ENCODE measurements at regions of chr15 and their contacts with region 1.

Region 1: DNA sequence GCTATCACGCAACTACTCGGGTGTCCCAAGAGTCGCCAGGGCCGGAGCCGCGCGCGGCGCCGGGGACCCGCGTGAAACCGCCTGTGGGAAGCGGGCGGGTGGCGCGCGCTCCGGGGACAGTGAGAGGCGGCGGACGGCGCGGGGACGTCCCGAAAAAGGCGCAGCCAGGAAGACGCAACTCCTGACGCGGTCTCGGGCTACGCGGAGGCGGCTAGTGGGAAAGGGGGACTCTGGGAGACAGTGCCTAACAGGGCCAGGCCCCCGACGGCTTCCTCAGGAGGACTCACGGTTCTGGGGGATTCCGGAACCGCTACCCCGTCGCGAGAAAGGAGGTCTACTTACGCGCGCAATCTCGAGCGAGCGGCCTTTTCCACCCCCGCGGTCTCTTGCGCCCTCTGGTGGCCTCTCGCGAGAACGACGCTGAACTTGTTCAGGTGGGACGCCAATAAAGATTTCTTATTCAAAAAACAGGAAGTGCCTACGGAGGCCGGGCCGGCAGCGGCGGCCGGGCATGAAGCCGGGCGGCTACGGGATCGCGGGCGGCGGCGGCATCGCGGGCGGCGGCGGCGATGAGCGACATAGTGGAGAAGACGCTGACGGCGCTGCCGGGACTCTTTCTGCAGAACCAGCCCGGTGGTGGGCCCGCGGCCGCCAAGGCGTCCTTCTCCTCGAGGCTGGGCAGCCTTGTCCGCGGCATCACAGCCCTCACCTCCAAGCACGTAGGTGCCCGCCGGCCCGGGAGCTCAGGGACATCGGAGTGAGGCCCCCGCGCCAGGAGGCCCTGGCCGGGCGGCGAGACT is at the start of gene AP4E1:
- DNase-seq: peak; percentile 95
- H3K4me3 Mint-ChIP-seq: peak within 1 kb of the TSS; percentile 83
- H3K27ac Mint-ChIP-seq: peak within 1 kb of the TSS; percentile 70
- H3K4me1 Mint-ChIP-seq: peaks cover 7% of the 10 kb centered on the region
- H3K27me3 Mint-ChIP-seq: no peaks in the 10 kb centered on the region
- CTCF ChIP-seq: peak; percentile 98
- total RNA-seq, gene AP4E1: 10.6 and 10.7 TPM in 2 replicates

Region 2: DNA sequence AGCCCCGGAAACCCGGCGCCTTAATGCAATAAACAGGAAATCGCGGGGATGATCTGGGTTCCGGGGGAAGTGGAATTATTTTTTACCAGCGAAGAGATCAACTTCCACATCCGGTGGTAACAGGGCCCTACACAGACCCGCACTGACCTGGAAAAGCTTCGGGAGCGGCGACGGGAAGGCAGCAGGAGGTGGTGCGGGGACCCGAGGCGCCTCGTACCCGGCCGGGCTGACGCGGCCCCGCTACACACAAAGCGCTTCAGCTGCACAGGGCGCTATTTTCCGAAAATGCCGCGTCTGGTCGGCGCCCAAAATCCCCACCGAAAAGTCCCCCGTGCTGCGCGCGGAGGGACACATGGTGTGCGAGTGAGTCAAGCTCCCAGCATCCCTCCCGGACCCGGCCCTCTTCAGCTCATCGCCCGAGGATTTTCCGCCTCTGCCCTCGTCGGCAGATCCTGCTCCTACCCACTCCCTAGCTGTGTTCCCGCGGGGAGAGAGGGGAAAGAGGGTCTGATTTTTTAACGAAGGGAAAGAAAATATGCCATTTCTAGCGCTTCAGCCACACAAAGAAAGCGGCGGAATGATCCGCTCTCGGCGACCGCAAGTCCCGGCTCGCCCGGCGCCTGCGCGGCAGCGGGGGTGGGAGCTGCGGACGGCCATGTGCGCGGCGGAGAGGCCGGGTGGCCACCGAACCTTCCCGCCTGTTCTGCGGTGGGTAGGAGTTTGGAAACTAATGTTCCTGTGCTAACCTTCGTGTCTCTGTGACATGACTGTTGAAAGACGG is 553.4 kb before region 1 on chr15 and contains the start of gene GABPB1:
- CTCF ChIA-PET with region 1: no interaction called
- intact Hi-C with region 1: loop called (anchors 10 kb)
- DNase-seq: peak; percentile 93
- H3K4me3 Mint-ChIP-seq: peak within 1 kb of the TSS; percentile 71
- H3K27ac Mint-ChIP-seq: peak within 1 kb of the TSS; percentile 64
- H3K4me1 Mint-ChIP-seq: peaks cover 41% of the 10 kb centered on the region
- H3K27me3 Mint-ChIP-seq: no peaks in the 10 kb centered on the region
- CTCF ChIP-seq: no peak
- total RNA-seq, gene GABPB1: 25.6 and 33.0 TPM in 2 replicates

Region 3: GRCh38 chr15:50675536-50676144 is 232.8 kb before region 1 on chr15:
- CTCF ChIA-PET with region 1: no interaction called
- intact Hi-C with region 1: loop called (anchors 1 kb)
- DNase-seq: peak; percentile 27
- H3K4me3 Mint-ChIP-seq: no peak overlapping the region
- H3K27ac Mint-ChIP-seq: no peak overlapping the region
- H3K4me1 Mint-ChIP-seq: peaks cover 9% of the 10 kb centered on the region
- H3K27me3 Mint-ChIP-seq: no peaks in the 10 kb centered on the region
- CTCF ChIP-seq: peak; percentile 68

Region 4: DNA sequence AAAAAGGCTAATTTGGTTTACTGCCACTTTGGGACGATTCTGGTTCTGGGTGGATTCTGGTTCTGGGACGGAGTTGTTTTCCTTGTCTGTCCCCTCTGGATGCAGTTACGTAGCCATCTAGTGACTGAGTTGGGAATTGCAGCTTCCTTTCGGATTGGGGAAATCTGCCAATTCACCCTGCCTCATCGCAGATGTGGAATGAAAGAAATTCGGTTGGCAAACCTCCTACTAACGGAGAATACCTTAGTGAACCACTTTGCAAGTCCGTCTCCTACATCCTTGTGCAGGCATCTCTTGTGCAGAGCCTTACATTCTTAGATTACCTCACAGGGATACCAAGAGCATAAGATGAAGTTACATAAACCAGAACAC is 31.4 kb before region 1 on chr15:
- CTCF ChIA-PET with region 1: interaction called, 4 read pairs
- intact Hi-C with region 1: loop called (anchors 2 kb)
- DNase-seq: peak; percentile 92
- H3K4me3 Mint-ChIP-seq: peak overlapping the region; percentile 65
- H3K27ac Mint-ChIP-seq: peak overlapping the region; percentile 83
- H3K4me1 Mint-ChIP-seq: peaks cover 74% of the 10 kb centered on the region
- H3K27me3 Mint-ChIP-seq: peaks cover 10% of the 10 kb centered on the region
- CTCF ChIP-seq: peak; percentile 95

Measured in Calu3 (cell line).